ENCODE measurements at regions of chr2 and their contacts with region 1.

Region 1: GRCh38 chr2:123670286-123670685 is 354.8 kb upstream of the CNTNAP5 start:
- DNase-seq: peak; percentile 91
- ATAC-seq: peak; percentile 98
- H3K4me3 ChIP-seq: no peak overlapping the region
- H3K27ac ChIP-seq: peak overlapping the region; percentile 50
- H3K4me1 ChIP-seq: peaks cover 19% of the 10 kb centered on the region
- H3K27me3 ChIP-seq: no peaks in the 10 kb centered on the region
- CTCF ChIP-seq: no peak

Region 2: DNA sequence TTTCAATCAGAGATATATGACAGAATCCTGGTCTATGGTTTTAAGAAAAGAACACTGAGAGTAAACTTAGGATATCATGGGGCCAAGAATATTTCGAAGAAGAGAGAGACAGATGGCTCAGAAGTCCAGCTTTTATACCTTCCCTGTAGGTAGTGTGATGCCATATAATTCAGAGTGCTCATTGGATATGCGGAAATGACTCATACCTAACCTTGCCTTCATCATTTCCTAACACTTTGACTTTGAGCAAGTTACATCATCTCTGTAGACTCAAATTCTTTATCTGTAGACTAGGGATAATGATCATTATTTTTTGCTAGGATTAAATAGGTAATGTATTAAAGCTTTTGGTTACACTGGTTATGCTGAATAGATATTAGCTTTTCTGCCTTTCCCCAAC is 106.8 kb before region 1 on chr2:
- CTCF ChIA-PET with region 1: no interaction called
- POLR2A ChIA-PET with region 1: no interaction called
- intact Hi-C with region 1: loop called (anchors 10 kb)
- DNase-seq: no peak
- ATAC-seq: no peak
- H3K4me3 ChIP-seq: no peak overlapping the region
- H3K27ac ChIP-seq: no peak overlapping the region
- H3K4me1 ChIP-seq: peaks cover 11% of the 10 kb centered on the region
- H3K27me3 ChIP-seq: no peaks in the 10 kb centered on the region
- CTCF ChIP-seq: no peak

Region 3: GRCh38 chr2:123717636-123718334 is 47.5 kb after region 1 on chr2:
- CTCF ChIA-PET with region 1: no interaction called
- POLR2A ChIA-PET with region 1: no interaction called
- intact Hi-C with region 1: loop called (anchors 2 kb)
- DNase-seq: no peak
- ATAC-seq: no peak
- H3K4me3 ChIP-seq: no peak overlapping the region
- H3K27ac ChIP-seq: no peak overlapping the region
- H3K4me1 ChIP-seq: peaks cover 37% of the 10 kb centered on the region
- H3K27me3 ChIP-seq: no peaks in the 10 kb centered on the region
- CTCF ChIP-seq: no peak

Measured in PC-3 (cell line).